ENCODE measurements at regions of chr10 and their contacts with region 1.

Region 1: DNA sequence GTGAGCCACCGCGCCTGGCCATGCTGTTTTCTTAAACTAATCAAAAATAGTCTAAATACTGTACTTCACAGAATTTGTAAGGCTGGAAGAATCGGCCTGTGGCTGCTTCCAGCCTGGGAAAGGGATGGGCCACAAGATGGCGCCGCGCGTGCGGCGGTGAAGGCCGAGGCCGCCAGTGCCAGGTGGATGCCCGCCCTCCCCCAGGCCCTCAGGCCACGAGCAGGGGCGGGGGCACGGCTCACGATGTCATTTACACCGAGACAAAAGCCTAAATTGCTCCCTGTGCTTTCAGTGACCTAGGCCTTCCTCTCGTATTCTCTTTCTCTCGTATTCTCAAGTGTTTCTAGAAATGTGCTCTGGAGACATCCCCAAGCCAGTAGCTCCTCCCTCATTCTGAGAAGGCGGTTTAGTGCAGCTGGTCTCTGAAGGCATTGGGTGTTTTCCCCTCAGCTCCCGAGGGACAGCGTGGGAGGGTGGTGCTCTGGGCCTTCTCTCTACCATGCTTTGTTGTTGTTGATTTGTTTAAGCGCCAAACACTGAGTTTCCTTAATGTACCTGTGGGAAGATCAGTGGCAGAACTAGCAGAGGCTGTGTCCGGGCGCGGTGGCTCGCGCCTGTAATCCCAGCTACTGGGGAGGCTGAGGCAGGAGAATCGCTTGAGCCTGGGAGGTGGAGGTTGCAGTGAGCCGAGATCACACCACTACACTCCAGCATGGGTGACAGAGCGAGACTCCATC is 68.4 kb downstream of the CDC123 start:
- ATAC-seq: peak; percentile 92 to 98 (median 96)
- H3K4me3 ChIP-seq: peak overlapping the region in 2 of 5 donors; percentile 7 to 11
- H3K27ac ChIP-seq: peak overlapping the region in 1 of 2 donors; percentile 45
- H3K4me1 ChIP-seq: no peaks in the 10 kb centered on the region

Region 2: GRCh38 chr10:12097791-12098190 is 166.6 kb before region 1 on chr10:
- in situ Hi-C with region 1: no loop called
- ATAC-seq: no peak
- H3K4me3 ChIP-seq: no peak overlapping the region
- H3K27ac ChIP-seq: no peak overlapping the region
- H3K4me1 ChIP-seq: no peaks in the 10 kb centered on the region

Region 3: DNA sequence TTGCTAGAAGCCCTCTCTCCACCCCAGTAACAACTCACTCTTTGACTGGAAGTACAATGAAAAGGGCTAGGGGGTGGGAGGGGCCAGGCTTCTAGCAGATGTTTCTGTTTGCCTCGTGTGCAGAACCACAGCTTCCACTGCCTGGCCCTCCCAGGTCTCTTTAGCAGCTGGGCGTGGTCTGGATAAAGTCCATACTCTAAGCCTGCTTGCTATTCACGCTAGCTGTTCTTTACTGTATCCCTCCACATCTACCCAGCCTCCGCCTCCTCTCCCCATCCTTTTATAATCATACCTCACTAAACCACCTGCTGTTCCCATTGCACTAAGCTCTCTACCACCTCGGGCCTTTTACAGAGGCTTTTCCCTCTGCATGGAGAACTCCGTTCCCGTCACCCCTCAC is 373.7 kb after region 1 on chr10:
- in situ Hi-C with region 1: loop called in 1 of 9 experiments (anchors 25 kb)
- ATAC-seq: peak; percentile 34 to 99 (median 76)
- H3K4me3 ChIP-seq: no peak overlapping the region
- H3K27ac ChIP-seq: no peak overlapping the region
- H3K4me1 ChIP-seq: peaks cover 4 to 18% of the 10 kb centered on the region in 2 donors

Region 4: GRCh38 chr10:12656518-12657142 is 392.3 kb after region 1 on chr10:
- in situ Hi-C with region 1: loop called in 1 of 9 experiments (anchors 25 kb)
- ATAC-seq: peak in 3 of 8 experiments; percentile 54 to 60 (median 59)
- H3K4me3 ChIP-seq: no peak overlapping the region
- H3K27ac ChIP-seq: no peak overlapping the region
- H3K4me1 ChIP-seq: no peaks in the 10 kb centered on the region

Region 5: DNA sequence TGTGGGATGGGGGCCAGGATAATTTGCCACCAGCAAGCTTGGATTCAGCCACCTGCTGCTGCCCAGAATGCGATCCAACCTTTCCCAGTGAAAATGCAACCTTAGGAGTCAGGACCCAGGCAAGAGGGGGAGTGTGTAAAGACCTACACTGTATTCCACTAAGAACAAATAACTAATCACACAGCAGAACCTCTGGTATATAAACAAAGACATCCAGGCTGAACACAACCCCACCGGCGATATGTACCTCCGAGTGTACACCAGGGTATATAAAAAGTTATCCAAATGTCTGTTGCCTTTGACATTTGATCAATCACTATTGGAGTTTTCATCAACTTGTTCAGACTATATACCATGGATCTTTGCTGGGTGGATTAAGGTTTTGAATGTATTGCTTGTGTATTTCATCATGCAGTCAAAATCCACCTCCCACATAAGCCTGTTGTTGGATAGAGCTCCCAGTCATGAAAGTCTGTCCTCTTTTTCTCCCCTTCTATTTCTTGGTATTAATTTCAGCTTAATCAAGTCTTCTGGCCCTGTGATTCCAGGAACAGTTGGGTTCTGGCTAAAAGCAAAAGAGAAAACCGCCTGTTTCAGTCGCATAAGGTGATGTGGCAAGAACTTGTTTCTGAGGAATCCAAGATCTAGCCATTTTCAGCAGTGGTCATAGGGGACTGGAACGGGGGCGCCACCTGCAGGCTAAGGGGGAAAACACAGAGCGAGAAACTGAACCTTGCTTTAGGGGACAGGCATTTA is 446.4 kb after region 1 on chr10:
- in situ Hi-C with region 1: loop called in 5 of 9 experiments (anchors 10 to 25 kb)
- ATAC-seq: peak; percentile 78 to 86 (median 82)
- H3K4me3 ChIP-seq: no peak overlapping the region
- H3K27ac ChIP-seq: peak overlapping the region; percentile 66 to 67
- H3K4me1 ChIP-seq: peaks cover 16 to 20% of the 10 kb centered on the region in 2 donors

Region 6: GRCh38 chr10:12902135-12902572 is 637.8 kb after region 1 on chr10:
- in situ Hi-C with region 1: loop called in 1 of 9 experiments (anchors 25 kb)
- ATAC-seq: peak in 7 of 8 experiments; percentile 35 to 71 (median 59)
- H3K4me3 ChIP-seq: no peak overlapping the region
- H3K27ac ChIP-seq: no peak overlapping the region
- H3K4me1 ChIP-seq: no peaks in the 10 kb centered on the region

Region 7: GRCh38 chr10:13074561-13075451 is 810.4 kb after region 1 on chr10:
- in situ Hi-C with region 1: loop called in 3 of 9 experiments (anchors 25 kb)
- ATAC-seq: peak; percentile 85 to 100 (median 94)
- H3K4me3 ChIP-seq: no peak overlapping the region
- H3K27ac ChIP-seq: no peak overlapping the region
- H3K4me1 ChIP-seq: no peaks in the 10 kb centered on the region

Region 8: GRCh38 chr10:13099666-13100348 is 835.4 kb after region 1 on chr10 and contains the start of gene OPTN:
- in situ Hi-C with region 1: loop called in 1 of 9 experiments (anchors 25 kb)
- ATAC-seq: peak; percentile 57 to 88 (median 85)
- H3K4me3 ChIP-seq: peak within 1 kb of the TSS; percentile 47 to 95 (median 67)
- H3K27ac ChIP-seq: peak within 1 kb of the TSS; percentile 31 to 47
- H3K4me1 ChIP-seq: peaks cover 0 to 5% of the 10 kb centered on the region in 2 donors
- total RNA-seq, gene OPTN: 23.0 to 186 (median 39.1) TPM